ENCODE measurements at regions of chr20 and their contacts with region 1.

Region 1: DNA sequence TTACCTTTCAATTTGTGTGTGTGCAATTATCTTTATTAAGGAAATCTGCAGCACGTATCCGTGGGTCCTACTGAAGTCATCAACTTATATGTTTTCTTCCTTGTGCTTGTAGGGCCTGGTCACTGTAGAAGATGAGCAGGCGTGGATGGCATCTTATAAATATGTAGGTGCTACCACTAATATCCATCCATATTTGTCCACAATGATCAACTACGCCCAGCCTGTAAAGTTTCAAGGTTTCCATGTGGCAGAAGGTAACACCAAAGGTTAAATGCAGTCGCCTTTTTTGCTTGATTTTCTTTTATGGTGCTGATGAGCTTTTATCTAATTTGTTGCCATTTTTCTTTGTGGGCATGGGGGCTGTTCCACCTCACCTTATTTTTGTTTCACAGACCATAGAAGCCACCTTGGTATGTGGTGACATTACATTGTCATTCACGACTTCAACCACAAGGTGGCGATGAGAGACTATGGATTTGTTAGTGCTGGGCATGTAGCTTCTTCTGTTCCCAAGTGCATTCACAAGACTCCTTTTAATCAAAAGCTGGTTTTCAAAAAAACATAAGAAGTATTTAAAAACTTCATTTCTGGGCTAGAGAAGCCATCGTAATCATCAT is 106.5 kb upstream of the LAMP5 start:
- DNase-seq: peak; percentile 70
- ATAC-seq: peak; percentile 66
- H3K4me3 Mint-ChIP-seq: no peak overlapping the region
- H3K27ac Mint-ChIP-seq: no peak overlapping the region
- H3K4me1 Mint-ChIP-seq: no peaks in the 10 kb centered on the region
- H3K27me3 Mint-ChIP-seq: no peaks in the 10 kb centered on the region

Region 2: DNA sequence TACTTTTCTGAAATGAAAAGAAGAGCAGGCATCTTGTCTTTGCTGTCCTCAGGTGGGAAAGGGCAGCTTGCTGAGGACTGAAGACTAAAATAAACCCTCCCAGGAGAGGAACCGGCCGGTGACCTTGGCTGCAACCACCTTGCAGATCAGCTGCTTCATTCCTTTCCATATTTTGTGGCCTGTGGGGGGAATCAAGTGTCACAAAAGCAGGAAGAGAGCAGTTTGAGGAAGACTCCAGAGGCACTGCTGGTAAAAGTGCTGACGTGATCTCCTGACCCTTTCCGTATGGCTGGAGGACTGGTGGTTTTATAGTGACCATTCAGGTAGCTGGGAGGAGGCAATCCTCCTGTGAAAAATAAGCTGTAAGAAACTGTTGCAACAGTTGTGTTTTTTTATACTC is 182.0 kb before region 1 on chr20:
- CTCF ChIA-PET with region 1: no interaction called
- POLR2A ChIA-PET with region 1: no interaction called
- intact Hi-C with region 1: no loop called
- DNase-seq: no peak
- ATAC-seq: no peak
- H3K4me3 Mint-ChIP-seq: no peak overlapping the region
- H3K27ac Mint-ChIP-seq: no peak overlapping the region
- H3K4me1 Mint-ChIP-seq: no peaks in the 10 kb centered on the region
- H3K27me3 Mint-ChIP-seq: no peaks in the 10 kb centered on the region

Region 3: GRCh38 chr20:9311132-9311531 is 96.8 kb before region 1 on chr20:
- CTCF ChIA-PET with region 1: no interaction called
- POLR2A ChIA-PET with region 1: no interaction called
- intact Hi-C with region 1: no loop called
- DNase-seq: no peak
- ATAC-seq: no peak
- H3K4me3 Mint-ChIP-seq: no peak overlapping the region
- H3K27ac Mint-ChIP-seq: no peak overlapping the region
- H3K4me1 Mint-ChIP-seq: no peaks in the 10 kb centered on the region
- H3K27me3 Mint-ChIP-seq: no peaks in the 10 kb centered on the region

Region 4: GRCh38 chr20:9602847-9603183 is 194.9 kb after region 1 on chr20:
- CTCF ChIA-PET with region 1: interaction called, 123 read pairs
- POLR2A ChIA-PET with region 1: no interaction called
- intact Hi-C with region 1: no loop called
- DNase-seq: no peak
- ATAC-seq: no peak
- H3K4me3 Mint-ChIP-seq: no peak overlapping the region
- H3K27ac Mint-ChIP-seq: no peak overlapping the region
- H3K4me1 Mint-ChIP-seq: no peaks in the 10 kb centered on the region
- H3K27me3 Mint-ChIP-seq: peaks cover 4% of the 10 kb centered on the region

Region 5: DNA sequence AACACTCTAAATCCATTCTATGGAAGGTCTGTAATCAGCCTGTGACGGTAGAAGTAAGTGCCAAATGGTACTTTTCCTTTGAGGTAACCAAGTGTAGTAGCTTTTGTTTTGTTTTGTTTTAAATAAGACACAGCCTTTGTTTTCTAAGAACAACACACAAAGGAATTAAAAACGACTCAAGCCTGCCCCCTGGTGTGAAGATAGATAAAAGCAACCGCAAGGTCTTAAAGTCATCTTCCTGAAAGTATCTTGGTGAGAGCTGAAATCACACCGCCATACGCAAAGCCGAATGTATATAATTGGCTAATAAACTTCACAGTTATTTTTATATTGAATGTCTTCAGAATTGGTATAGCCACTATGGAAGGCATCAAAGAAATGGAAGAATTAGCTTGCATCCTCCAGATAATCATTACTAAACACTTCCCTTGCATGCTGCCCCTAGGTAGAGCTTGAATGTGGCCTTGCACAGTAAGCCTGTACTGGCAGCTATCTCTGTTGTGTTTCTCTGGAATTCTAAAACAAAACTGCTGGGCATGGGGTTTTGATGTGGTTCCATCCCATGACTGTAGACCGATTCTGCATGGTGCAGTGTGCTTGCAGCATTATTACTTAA is 202.1 kb after region 1 on chr20:
- CTCF ChIA-PET with region 1: interaction called, 123 read pairs
- POLR2A ChIA-PET with region 1: no interaction called
- intact Hi-C with region 1: loop called (anchors 1 kb)
- DNase-seq: peak; percentile 71
- ATAC-seq: no peak
- H3K4me3 Mint-ChIP-seq: no peak overlapping the region
- H3K27ac Mint-ChIP-seq: no peak overlapping the region
- H3K4me1 Mint-ChIP-seq: no peaks in the 10 kb centered on the region
- H3K27me3 Mint-ChIP-seq: peaks cover 7% of the 10 kb centered on the region

Region 6: GRCh38 chr20:9912858-9913434 is 505.0 kb after region 1 on chr20:
- CTCF ChIA-PET with region 1: interaction called, 5 read pairs
- POLR2A ChIA-PET with region 1: no interaction called
- intact Hi-C with region 1: loop called (anchors 2 to 10 kb)
- DNase-seq: peak; percentile 47
- ATAC-seq: no peak
- H3K4me3 Mint-ChIP-seq: no peak overlapping the region
- H3K27ac Mint-ChIP-seq: no peak overlapping the region
- H3K4me1 Mint-ChIP-seq: no peaks in the 10 kb centered on the region
- H3K27me3 Mint-ChIP-seq: peaks cover 17% of the 10 kb centered on the region

Region 7: GRCh38 chr20:9949563-9949962 is 541.6 kb after region 1 on chr20:
- CTCF ChIA-PET with region 1: no interaction called
- POLR2A ChIA-PET with region 1: no interaction called
- intact Hi-C with region 1: no loop called
- DNase-seq: no peak
- ATAC-seq: no peak
- H3K4me3 Mint-ChIP-seq: no peak overlapping the region
- H3K27ac Mint-ChIP-seq: no peak overlapping the region
- H3K4me1 Mint-ChIP-seq: no peaks in the 10 kb centered on the region
- H3K27me3 Mint-ChIP-seq: peaks cover 3% of the 10 kb centered on the region

Region 8: GRCh38 chr20:10074513-10074912 is 666.6 kb after region 1 on chr20:
- CTCF ChIA-PET with region 1: no interaction called
- POLR2A ChIA-PET with region 1: no interaction called
- intact Hi-C with region 1: loop called in 1 of 2 experiments (anchors 10 kb)
- DNase-seq: no peak
- ATAC-seq: peak; percentile 58
- H3K4me3 Mint-ChIP-seq: no peak overlapping the region
- H3K27ac Mint-ChIP-seq: no peak overlapping the region
- H3K4me1 Mint-ChIP-seq: no peaks in the 10 kb centered on the region
- H3K27me3 Mint-ChIP-seq: peaks cover 13% of the 10 kb centered on the region